KBM-7 (cell line): ENCODE measurements at regions of chr13 and their contacts with region 1.

Region 1: DNA sequence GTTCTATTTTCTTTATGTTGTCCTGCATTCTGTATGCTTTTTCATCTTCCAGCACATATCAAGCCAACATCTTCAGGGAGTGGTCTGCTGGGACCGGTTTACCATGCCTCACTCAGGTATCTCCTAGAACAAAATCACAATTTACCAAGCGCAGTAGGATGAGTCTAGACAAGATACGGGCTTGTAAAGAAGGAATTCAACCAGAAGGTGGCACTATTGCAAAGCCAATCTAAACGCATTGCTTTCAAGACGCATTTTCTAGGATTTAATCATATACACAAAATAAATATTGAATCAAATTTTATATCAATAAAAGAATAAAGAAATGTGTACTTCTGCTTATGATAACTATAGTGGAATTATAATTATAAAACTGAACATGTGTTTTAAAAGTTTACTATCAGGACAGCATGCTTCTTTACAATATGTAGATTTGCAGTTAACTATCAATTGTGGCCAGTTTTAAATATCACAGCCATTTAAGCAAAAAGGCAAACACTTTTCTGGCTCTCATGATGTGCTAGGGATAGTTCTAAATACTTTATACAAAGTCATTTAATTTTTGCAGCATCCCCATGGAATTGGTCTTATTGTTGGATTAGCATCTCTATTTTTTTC is 16.1 kb upstream of the TPP2 start:
- DNase-seq: peak; percentile 68

Region 2: DNA sequence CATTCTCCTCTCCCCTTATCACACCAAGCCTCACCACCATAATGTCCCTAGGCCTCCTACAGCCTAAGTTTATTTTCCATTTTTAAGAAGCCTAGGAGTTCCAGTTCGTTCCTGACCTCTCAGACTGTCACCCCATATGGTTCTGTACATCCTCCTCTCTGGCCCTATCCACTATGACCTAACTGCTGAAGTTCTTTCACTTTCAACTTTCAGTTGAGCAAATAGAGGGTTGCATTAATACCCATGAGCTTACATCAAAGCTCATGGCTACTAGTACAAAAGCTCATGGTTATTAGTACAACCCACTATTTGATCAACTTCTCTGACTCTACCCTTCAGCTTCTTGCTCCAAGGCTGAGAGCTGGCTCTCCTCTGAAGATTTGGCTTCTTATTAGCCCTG is 251.8 kb before region 1 on chr13:
- in situ Hi-C with region 1: no loop called
- DNase-seq: no peak

Region 3: GRCh38 chr13:102845630-102846260 is 265.1 kb after region 1 on chr13 and contains the start of gene ERCC5:
- in situ Hi-C with region 1: loop called (anchors 10 kb)
- DNase-seq: peak; percentile 98